CD4-positive, alpha-beta memory T cell (primary cell): ENCODE measurements at regions of chr12 and their contacts with region 1.

Region 1: DNA sequence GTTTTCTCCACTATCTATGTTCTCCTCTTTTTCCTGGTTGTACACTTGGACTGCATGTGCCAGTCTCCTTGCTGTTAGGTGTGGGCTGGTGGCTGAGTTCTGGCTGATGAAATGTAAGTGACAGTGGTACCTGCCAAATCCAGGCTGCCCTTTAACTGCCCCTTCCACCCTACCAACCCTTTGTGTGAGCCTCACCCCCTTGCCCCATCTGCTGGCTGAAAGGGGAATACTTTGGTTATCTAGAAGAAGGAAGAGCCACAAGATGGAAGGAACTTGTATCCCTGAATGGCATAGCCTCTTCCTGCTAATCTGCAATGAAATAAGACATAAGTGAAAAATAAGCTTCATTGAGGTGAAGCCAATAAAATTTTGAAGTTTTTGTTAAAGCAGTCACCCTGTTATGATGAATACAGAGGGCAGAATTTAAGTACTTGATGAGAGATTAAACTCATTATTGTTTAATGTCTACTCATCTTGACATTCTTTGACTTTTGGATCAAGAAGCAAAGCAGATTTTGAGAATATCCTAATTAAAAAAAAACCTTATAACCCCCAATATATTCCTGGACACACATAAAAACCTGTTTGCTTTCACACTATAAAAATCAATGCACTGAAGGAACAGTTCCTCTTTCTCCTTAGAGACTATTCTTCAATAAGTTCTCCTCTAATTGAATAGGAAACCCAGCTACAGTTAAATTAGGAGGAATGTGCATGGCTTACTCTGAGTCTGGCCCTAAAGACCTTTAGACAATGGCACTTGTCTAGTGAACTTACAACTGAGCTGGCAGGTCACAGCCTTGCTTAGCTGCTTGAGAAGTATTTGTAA is 262.6 kb upstream of the BTG1 start:
- DNase-seq: peak in 3 of 5 donors; percentile 38 to 45 (median 45)
- H3K4me3 ChIP-seq: no peak overlapping the region
- H3K4me3 Mint-ChIP-seq: peak overlapping the region in 5 of 8 donors; percentile 2 to 80 (median 30)
- H3K27ac ChIP-seq: no peak overlapping the region
- H3K27ac Mint-ChIP-seq: peak overlapping the region in 6 of 7 donors; percentile 30 to 91 (median 77)
- H3K4me1 ChIP-seq: peaks cover 40% of the 10 kb centered on the region
- H3K4me1 Mint-ChIP-seq: peaks cover 38 to 73% (median 49%) of the 10 kb centered on the region in 4 donors
- H3K27me3 ChIP-seq: no peaks in the 10 kb centered on the region
- H3K27me3 Mint-ChIP-seq: no peaks in the 10 kb centered on the region

Region 2: GRCh38 chr12:91577586-91578539 is 830.4 kb before region 1 on chr12:
- CTCF ChIA-PET with region 1: interaction called, 8 read pairs
- POLR2A ChIA-PET with region 1: interaction called, 3 read pairs
- intact Hi-C with region 1: loop called (anchors 5 kb)
- DNase-seq: peak in 4 of 5 donors; percentile 33 to 44 (median 42)
- H3K4me3 ChIP-seq: peak overlapping the region; percentile 18 to 50
- H3K4me3 Mint-ChIP-seq: peak overlapping the region; percentile 77 to 91 (median 84)
- H3K27ac ChIP-seq: no peak overlapping the region
- H3K27ac Mint-ChIP-seq: peak overlapping the region in 5 of 7 donors; percentile 33 to 91 (median 77)
- H3K4me1 ChIP-seq: peaks cover 4% of the 10 kb centered on the region
- H3K4me1 Mint-ChIP-seq: peaks cover 4 to 9% (median 5%) of the 10 kb centered on the region in 4 donors
- H3K27me3 ChIP-seq: no peaks in the 10 kb centered on the region
- H3K27me3 Mint-ChIP-seq: peaks cover 1 to 3% of the 10 kb centered on the region in 2 donors

Region 3: DNA sequence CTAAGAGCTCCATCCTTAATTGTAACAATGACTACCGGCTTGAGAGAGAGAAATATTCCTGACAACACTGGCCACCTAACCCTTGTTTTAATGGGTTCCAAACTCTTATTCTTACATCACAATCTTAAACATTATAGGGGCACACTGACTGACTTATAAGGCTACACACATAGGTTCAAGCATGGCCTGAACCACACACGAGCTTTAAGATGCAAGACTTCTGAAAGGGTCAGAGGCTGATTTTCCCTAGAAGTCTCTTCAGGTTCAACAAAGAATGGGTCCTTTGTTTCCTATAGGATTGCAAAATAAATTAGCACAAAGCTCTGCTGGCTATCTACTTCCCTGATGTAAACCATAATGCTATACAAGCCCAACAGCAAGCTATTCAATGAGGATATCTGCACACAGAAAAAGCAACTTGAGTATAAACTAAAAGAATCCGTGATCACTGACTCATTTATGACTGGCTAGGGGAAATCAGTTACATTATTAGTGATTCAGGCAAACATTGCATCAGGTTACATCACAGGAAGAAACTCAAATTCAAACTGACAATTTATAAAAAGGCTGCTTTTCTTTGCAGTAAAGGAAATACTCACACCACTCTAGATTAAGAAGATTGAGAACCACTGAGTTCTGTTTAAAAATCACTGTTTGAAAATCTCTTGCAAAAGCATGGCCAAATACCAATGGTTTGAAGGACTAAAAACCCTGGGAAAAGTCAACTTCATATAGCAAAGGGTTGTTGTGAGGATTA is 271.1 kb before region 1 on chr12:
- CTCF ChIA-PET with region 1: interaction called, 6 read pairs
- POLR2A ChIA-PET with region 1: interaction called, 630 read pairs
- intact Hi-C with region 1: no loop called
- DNase-seq: no peak
- H3K4me3 ChIP-seq: peak overlapping the region; percentile 83 to 89
- H3K4me3 Mint-ChIP-seq: peak overlapping the region; percentile 87 to 100 (median 100)
- H3K27ac ChIP-seq: peak overlapping the region; percentile 86
- H3K27ac Mint-ChIP-seq: peak overlapping the region; percentile 83 to 100 (median 99)
- H3K4me1 ChIP-seq: peaks cover 52% of the 10 kb centered on the region
- H3K4me1 Mint-ChIP-seq: peaks cover 43 to 59% (median 49%) of the 10 kb centered on the region in 4 donors
- H3K27me3 ChIP-seq: no peaks in the 10 kb centered on the region
- H3K27me3 Mint-ChIP-seq: no peaks in the 10 kb centered on the region

Region 4: GRCh38 chr12:92297932-92298696 is 110.2 kb before region 1 on chr12:
- CTCF ChIA-PET with region 1: interaction called, 3 read pairs
- POLR2A ChIA-PET with region 1: interaction called, 5 read pairs
- intact Hi-C with region 1: loop called (anchors 1 kb)
- DNase-seq: peak in 4 of 5 donors; percentile 33 to 49 (median 46)
- H3K4me3 ChIP-seq: no peak overlapping the region
- H3K4me3 Mint-ChIP-seq: peak overlapping the region; percentile 28 to 78 (median 72)
- H3K27ac ChIP-seq: no peak overlapping the region
- H3K27ac Mint-ChIP-seq: peak overlapping the region in 5 of 7 donors; percentile 76 to 93 (median 93)
- H3K4me1 ChIP-seq: peaks cover 40% of the 10 kb centered on the region
- H3K4me1 Mint-ChIP-seq: peaks cover 21 to 33% (median 28%) of the 10 kb centered on the region in 4 donors
- H3K27me3 ChIP-seq: no peaks in the 10 kb centered on the region
- H3K27me3 Mint-ChIP-seq: no peaks in the 10 kb centered on the region

Region 5: GRCh38 chr12:92396647-92397252 is 11.5 kb before region 1 on chr12:
- CTCF ChIA-PET with region 1: interaction called, 5 read pairs
- POLR2A ChIA-PET with region 1: interaction called, 23 read pairs
- intact Hi-C with region 1: no loop called
- DNase-seq: no peak
- H3K4me3 ChIP-seq: no peak overlapping the region
- H3K4me3 Mint-ChIP-seq: peak overlapping the region in 6 of 8 donors; percentile 19 to 81 (median 57)
- H3K27ac ChIP-seq: peak overlapping the region; percentile 72
- H3K27ac Mint-ChIP-seq: peak overlapping the region; percentile 93 to 98 (median 97)
- H3K4me1 ChIP-seq: peaks cover 93% of the 10 kb centered on the region
- H3K4me1 Mint-ChIP-seq: peaks cover 74 to 100% (median 89%) of the 10 kb centered on the region in 4 donors
- H3K27me3 ChIP-seq: no peaks in the 10 kb centered on the region
- H3K27me3 Mint-ChIP-seq: no peaks in the 10 kb centered on the region

Region 6: DNA sequence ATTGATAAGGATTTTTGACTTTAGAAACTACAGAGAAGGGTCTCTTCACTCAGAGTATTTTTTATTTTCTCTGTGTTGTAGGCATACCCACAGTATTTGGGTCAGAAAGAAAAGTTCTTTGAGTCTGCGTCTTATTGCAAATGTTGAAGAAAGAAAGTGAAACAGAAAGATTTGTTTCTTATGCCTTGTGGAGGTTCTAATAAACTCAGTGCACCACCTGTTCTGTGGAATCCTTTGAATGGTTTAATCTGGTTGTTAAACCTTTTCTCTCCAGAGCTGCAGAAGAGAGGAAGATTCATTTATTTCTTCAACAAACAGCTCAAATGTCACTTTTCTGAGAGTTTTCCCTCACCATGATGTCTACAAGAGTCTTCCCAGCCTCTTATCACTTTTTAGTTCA is 147.9 kb after region 1 on chr12:
- CTCF ChIA-PET with region 1: interaction called, 3 read pairs
- POLR2A ChIA-PET with region 1: interaction called, 6 read pairs
- intact Hi-C with region 1: loop called (anchors 5 kb)
- DNase-seq: peak in 4 of 5 donors; percentile 22 to 34 (median 28)
- H3K4me3 ChIP-seq: peak overlapping the region; percentile 24 to 27
- H3K4me3 Mint-ChIP-seq: peak overlapping the region; percentile 31 to 79 (median 60)
- H3K27ac ChIP-seq: peak overlapping the region; percentile 30
- H3K27ac Mint-ChIP-seq: peak overlapping the region; percentile 49 to 96 (median 81)
- H3K4me1 ChIP-seq: peaks cover 50% of the 10 kb centered on the region
- H3K4me1 Mint-ChIP-seq: peaks cover 25 to 53% (median 40%) of the 10 kb centered on the region in 4 donors
- H3K27me3 ChIP-seq: no peaks in the 10 kb centered on the region
- H3K27me3 Mint-ChIP-seq: no peaks in the 10 kb centered on the region